GM12878 (cell line): ENCODE measurements at regions of chr12 and their contacts with region 1.

Region 1: GRCh38 chr12:29691141-29691854 is 92.4 kb downstream of the TMTC1 start:
- DNase-seq: peak; percentile 52
- ATAC-seq: peak; percentile 86
- H3K4me3 ChIP-seq: no peak overlapping the region
- H3K27ac ChIP-seq: no peak overlapping the region
- H3K4me1 ChIP-seq: no peaks in the 10 kb centered on the region
- H3K27me3 ChIP-seq: no peaks in the 10 kb centered on the region
- CTCF ChIP-seq: no peak
- EP300 ChIP-seq: peak in 1 of 2 experiments; percentile 18; a peak in 1 of 4 replicates
- POLR2A ChIP-seq: no peak
- RAD21 ChIP-seq: no peak

Region 2: DNA sequence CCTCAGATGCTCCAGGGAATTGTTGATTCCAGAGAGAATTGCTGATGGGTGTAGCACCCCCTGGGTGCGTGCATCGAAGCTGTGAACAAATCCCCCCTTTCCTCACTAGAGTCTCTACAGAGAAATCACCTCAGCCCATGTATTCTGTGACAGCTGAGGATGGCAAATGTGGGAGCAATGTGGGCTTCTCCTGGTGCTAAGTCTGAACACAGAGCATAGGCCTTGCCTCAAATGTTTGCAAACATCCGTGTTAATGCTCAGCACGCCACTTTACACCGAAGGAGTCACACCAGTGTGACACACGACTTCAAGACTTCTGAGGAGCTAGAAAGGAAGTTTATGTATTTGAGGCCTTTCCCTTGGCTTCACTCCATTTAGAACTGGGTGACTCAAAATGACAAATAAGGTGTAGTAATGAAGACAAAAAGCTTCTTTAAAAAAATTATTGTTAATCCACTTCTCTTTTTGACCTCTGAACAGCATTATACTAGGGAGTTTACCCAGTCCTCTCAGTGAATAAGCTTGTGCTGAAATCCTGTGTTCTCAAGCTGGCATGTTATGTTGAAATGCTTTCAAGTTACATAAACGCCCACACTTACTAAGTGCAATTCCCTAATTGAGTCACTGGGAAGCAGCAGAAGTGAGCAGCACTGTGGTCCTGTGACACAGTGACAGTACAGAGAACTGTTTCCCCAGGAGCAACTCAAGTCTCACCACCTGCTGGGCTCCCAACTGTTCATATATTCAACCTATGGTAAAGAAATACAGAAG is 449.3 kb before region 1 on chr12:
- CTCF ChIA-PET with region 1: no interaction called
- POLR2A ChIA-PET with region 1: no interaction called
- RAD21 ChIA-PET with region 1: no interaction called
- SMC1A ChIA-PET with region 1: no interaction called
- in situ Hi-C with region 1: no loop called
- intact Hi-C with region 1: no loop called
- DNase-seq: peak; percentile 72
- ATAC-seq: peak; percentile 90
- H3K4me3 ChIP-seq: no peak overlapping the region
- H3K27ac ChIP-seq: peak overlapping the region; percentile 27; the same call in 1 of the 2 replicates
- H3K4me1 ChIP-seq: peaks cover 17% of the 10 kb centered on the region
- H3K27me3 ChIP-seq: no peaks in the 10 kb centered on the region
- CTCF ChIP-seq: no peak; a peak in 1 of 6 replicates
- EP300 ChIP-seq: peak; percentile 8 to 43; a peak in 1 of 4 replicates
- POLR2A ChIP-seq: no peak
- RAD21 ChIP-seq: no peak

Region 3: DNA sequence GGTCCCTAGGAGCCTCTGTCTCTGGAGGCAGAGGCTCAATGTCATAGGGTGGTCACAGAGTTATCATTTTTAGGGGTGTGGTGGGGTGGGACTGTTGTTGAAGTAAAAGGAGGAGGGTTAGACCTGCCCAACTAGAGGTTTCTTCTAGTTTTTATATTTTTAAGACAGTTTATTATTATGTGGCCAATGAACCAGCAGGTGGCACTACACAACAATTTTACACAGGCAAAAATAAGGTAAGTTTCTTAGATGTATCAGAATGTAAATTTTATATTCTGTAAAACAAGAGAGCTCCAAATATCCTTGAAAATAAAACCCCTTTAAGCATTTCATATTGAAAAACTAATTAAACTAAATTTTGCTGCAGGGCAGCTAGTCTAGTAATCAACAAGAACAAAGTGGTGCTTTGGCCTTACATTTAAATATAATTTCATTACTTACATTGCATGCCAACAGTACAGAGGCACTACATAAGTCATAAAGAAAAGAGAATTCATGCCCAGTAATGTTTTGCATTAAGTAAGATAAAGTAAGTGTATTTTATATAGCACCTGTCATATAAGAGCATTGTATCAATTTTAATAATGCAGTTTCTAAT is 171.6 kb before region 1 on chr12:
- CTCF ChIA-PET with region 1: no interaction called
- POLR2A ChIA-PET with region 1: no interaction called
- RAD21 ChIA-PET with region 1: no interaction called
- SMC1A ChIA-PET with region 1: no interaction called
- in situ Hi-C with region 1: no loop called
- intact Hi-C with region 1: no loop called
- DNase-seq: no peak
- ATAC-seq: peak; percentile 71
- H3K4me3 ChIP-seq: no peak overlapping the region
- H3K27ac ChIP-seq: no peak overlapping the region
- H3K4me1 ChIP-seq: no peaks in the 10 kb centered on the region
- H3K27me3 ChIP-seq: no peaks in the 10 kb centered on the region
- CTCF ChIP-seq: peak; percentile 40 to 66 (median 52); a peak in 5 of 6 replicates
- EP300 ChIP-seq: no peak
- POLR2A ChIP-seq: no peak
- RAD21 ChIP-seq: peak; percentile 71

Region 4: DNA sequence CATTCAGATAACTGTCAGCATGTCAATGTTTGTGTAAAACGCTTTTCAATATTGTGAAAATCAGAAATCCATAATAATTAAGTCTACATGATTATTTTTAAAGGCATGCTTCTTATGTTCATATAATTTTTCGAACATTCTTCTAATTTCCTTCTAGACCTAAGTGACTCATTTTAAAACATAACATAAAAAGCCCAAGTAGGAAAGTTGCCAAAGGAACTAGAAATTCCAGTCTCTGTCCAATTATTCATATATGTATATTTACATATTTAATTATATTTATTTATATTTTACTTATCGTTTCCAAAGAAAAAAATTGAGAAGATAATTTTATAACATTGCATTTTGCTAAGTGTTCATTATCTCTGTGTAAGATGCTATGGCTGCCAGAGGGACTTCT is 18.0 kb before region 1 on chr12:
- CTCF ChIA-PET with region 1: interaction called, 4 read pairs
- POLR2A ChIA-PET with region 1: interaction called, 3 read pairs
- RAD21 ChIA-PET with region 1: interaction called, 9 read pairs
- SMC1A ChIA-PET with region 1: interaction called, 20 read pairs
- in situ Hi-C with region 1: no loop called
- intact Hi-C with region 1: no loop called
- DNase-seq: no peak
- ATAC-seq: no peak
- H3K4me3 ChIP-seq: no peak overlapping the region
- H3K27ac ChIP-seq: no peak overlapping the region
- H3K4me1 ChIP-seq: no peaks in the 10 kb centered on the region
- H3K27me3 ChIP-seq: no peaks in the 10 kb centered on the region
- CTCF ChIP-seq: no peak
- EP300 ChIP-seq: no peak
- POLR2A ChIP-seq: no peak
- RAD21 ChIP-seq: no peak

Region 5: DNA sequence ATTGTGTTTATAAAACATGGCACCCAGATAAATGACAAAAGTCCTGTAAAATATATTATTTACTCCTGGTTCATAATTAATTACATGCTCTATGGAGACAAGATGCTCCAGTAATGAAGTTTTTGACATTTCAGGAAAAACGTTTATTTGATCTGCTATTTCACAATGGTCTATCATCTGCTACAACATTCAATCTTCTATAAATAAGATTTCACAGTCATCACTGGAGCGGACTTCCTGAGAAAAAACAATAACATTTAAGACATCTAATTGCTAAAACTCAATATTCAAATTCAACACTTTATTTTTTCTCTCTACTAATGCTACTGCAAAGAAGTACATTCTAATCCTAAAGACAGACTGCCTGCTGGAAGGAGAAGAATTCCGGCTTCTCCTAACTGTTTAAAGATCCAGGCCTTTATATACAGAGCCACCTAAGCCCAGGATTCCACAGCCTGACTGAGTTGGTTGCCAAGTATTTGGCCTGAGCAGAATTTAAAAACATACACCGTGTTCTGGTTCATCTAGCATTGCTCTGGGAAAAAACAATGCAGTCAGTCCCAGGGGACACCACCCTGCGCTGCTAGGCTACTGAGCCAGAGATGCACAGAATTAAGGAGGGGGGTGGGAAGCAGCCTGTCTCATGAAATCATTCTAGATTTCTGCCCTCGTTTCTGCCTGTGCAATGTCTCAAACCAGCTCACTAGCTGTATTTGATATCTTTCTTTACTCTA is 34.5 kb after region 1 on chr12:
- CTCF ChIA-PET with region 1: no interaction called
- POLR2A ChIA-PET with region 1: interaction called, 5 read pairs
- RAD21 ChIA-PET with region 1: interaction called, 14 read pairs
- SMC1A ChIA-PET with region 1: interaction called, 6 read pairs
- in situ Hi-C with region 1: no loop called
- intact Hi-C with region 1: no loop called
- DNase-seq: peak; percentile 54
- ATAC-seq: peak; percentile 91
- H3K4me3 ChIP-seq: no peak overlapping the region
- H3K27ac ChIP-seq: no peak overlapping the region
- H3K4me1 ChIP-seq: no peaks in the 10 kb centered on the region
- H3K27me3 ChIP-seq: no peaks in the 10 kb centered on the region
- CTCF ChIP-seq: no peak
- EP300 ChIP-seq: 0 out of 4 replicates have a peak, but pooled peaks of 1 of the 2 experiments have one; percentile 12
- POLR2A ChIP-seq: no peak
- RAD21 ChIP-seq: no peak

Region 6: GRCh38 chr12:29750131-29750927 is 59.0 kb after region 1 on chr12:
- CTCF ChIA-PET with region 1: no interaction called
- POLR2A ChIA-PET with region 1: no interaction called
- RAD21 ChIA-PET with region 1: interaction called, 10 read pairs
- SMC1A ChIA-PET with region 1: interaction called, 7 read pairs
- in situ Hi-C with region 1: no loop called
- intact Hi-C with region 1: loop called (anchors 2 kb)
- DNase-seq: peak; percentile 75
- ATAC-seq: peak; percentile 95
- H3K4me3 ChIP-seq: no peak overlapping the region
- H3K27ac ChIP-seq: no peak overlapping the region
- H3K4me1 ChIP-seq: peaks cover 9% of the 10 kb centered on the region
- H3K27me3 ChIP-seq: no peaks in the 10 kb centered on the region
- CTCF ChIP-seq: no peak
- EP300 ChIP-seq: peak in 1 of 2 experiments; percentile 41; a peak in 1 of 4 replicates
- POLR2A ChIP-seq: no peak
- RAD21 ChIP-seq: no peak